Dendritic cell treated with granulocyte-macrophage colony-stimulating factor and Interleukin-4, amounts not matched to agents 40 ng/mL and 50 ng/mL, for 4 days (primary cell): ENCODE measurements at regions of chr7 and their contacts with region 1.

Region 1: DNA sequence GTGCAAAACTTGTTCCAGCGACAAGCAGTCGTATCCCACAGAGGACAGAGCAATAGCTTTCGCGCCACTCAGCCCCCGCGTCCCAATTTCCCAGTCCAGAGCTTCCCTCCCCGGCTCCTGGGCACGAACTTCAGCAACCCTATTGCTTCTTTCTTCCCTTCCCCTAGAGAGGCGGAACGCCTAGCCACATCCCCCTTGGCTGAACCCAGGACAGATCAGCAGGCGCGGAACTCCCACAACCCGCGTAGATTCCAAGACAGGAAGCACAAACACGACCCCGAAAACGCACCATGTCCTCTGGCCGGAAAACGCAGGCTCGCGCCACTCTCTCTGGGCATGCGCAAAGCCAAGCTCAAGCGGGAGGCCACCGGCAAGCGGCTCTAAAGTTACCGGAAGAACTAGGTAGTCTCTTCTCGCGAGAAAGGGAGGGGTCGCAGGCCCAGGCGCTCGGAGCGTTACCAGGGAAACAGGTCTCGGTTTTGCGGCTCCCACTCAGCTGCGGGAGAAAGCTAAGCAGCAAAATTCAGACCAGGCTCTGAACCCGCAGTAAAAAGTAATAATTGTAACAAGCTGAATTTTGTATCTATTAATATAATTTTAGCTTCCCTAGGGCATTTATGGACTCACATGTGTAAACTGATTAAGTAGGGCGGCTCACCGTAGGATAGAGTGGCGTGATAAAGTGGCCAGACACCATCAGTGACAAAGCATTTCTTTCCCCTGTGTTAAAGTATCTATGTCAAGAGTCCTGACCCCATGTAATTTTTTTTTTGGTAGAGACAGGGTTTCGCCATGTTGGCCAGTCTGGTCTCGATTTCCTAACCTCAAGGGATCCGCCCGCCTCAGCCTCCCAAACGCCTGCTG is at the start of gene TMEM209:
- H3K4me3 Mint-ChIP-seq: peak within 1 kb of the TSS; percentile 96
- H3K27ac Mint-ChIP-seq: peak within 1 kb of the TSS; percentile 93
- H3K4me1 Mint-ChIP-seq: peaks cover 5% of the 10 kb centered on the region
- H3K27me3 Mint-ChIP-seq: no peaks in the 10 kb centered on the region

Region 2: DNA sequence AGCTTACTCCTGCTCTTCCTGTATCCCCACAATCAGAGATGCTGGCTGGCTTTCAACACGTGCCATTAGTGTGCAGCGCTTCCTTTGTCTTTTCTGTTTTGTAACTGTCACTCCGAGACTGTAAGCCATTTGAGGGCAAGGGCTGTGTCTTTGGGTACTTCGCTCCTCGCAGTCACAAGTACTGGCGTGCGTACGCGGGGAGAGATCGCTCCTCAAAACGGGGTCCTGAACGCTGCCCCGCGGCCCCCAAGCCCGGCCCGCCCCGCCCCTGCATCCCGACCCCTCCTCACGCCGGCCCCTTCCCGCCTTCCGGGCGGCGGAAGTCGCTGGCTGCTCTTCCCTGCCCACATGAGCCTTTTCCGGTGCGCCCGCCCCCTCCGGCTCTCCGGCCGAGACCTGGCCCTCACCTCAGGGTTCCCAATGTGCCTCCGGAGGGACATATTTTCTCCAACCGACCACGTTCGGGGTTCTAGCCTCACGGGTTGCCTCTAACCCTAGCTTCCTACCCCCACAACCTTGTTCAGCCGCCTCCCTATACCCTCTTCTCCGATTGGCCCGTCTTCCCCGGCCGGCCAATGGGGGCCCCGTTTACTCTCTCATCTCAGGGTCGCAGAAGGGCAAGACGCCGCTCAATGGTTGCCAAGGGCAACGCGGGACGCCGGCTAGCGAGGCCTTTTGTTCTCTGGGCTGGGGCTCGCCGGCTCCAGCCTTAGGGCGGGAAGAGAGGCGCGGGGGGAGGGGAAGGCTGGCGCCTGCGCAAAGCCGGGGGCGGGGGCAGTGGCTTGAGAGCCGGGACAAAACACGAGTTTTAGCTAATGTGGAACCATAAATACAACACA is 235.4 kb after region 1 on chr7 and contains the start of gene CEP41:
- intact Hi-C with region 1: loop called (anchors 2 kb)
- H3K4me3 Mint-ChIP-seq: peak within 1 kb of the TSS; percentile 99
- H3K27ac Mint-ChIP-seq: peak within 1 kb of the TSS; percentile 92
- H3K4me1 Mint-ChIP-seq: peaks cover 18% of the 10 kb centered on the region
- H3K27me3 Mint-ChIP-seq: no peaks in the 10 kb centered on the region

Region 3: DNA sequence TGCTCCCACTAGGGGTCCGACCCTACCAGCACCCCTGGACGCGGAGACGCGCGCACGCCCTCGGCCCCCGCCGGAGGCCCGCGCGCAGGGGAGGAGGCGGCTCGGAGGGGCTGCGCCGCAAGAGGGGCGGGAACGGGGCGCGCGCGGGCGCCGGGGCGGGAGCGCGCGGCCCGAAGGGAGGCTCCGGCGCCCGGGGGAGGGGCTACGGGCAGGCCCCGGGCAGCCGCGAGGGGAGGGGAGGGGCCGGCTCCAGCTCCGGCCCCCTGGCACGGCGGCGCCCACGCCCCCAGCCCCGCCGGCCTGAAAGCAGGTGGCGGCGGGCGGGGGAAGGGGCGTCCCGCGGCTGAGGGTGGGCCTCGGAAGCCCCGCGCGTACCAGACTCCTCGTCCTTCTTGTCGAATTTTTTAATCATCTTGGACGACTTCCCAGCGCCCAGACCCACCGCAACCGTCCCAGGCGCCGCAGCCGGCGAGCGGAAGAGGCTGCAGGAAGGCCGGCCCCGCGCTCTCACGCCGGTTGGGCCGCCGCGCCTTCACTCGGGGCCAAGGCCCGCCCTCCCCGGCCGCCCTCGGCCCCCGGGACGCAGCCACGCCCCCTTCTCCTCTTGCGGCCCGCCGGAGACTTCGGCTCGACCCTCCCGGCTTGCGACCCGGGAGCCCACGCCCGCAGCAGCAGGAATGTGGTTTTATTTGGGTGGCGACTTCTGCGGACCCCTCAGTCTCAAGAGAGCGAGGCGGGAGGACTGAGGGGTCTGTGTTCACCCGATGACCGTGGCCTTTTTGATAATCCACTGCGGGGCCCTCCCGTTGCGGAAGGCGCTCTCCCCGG is 463.2 kb after region 1 on chr7 and contains the start of gene COPG2:
- intact Hi-C with region 1: loop called (anchors 2 kb)
- H3K4me3 Mint-ChIP-seq: peak within 1 kb of the TSS; percentile 92
- H3K27ac Mint-ChIP-seq: peak within 1 kb of the TSS; percentile 90
- H3K4me1 Mint-ChIP-seq: peaks cover 26% of the 10 kb centered on the region
- H3K27me3 Mint-ChIP-seq: no peaks in the 10 kb centered on the region